Activated CD4-positive, alpha-beta T cell treated with anti-CD3 and anti-CD28 coated beads for 36 hours (primary cell): ENCODE measurements at regions of chr4 and their contacts with region 1.

Region 1: DNA sequence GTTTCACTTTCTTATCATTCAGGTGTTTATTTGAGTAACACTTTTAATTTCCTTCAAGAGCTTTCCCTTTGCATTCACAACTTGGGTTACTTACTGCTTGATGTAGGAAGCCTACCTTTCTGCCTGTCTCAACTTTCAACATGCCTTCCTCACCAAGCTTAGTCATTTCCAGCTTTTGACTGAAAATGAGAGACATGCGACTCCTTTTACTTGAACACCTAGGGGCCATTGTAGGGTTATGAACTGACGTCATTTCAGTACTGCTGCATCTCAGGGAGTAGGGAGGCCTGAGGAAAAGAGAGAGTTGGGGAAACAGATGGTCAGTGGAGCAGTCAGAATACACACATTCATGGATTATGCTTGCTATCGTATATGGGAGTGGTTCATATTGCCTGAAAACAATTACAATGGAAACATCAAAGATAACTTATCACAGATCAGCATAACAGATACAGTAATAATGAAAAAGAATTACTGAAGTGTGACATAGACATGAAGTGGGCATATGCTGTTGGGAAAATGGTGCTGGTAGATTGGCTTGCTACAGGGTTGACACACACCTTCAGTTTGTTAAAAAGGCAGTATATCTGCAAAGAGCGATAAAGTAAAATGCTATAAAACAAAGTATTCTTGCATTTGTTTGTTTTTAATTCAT is 25.7 kb downstream of the USP53 start:
- DNase-seq: peak; percentile 46
- ATAC-seq: peak; percentile 98
- H3K4me3 Mint-ChIP-seq: peak overlapping the region; percentile 24
- H3K27ac Mint-ChIP-seq: peak overlapping the region; percentile 75
- H3K4me1 Mint-ChIP-seq: peaks cover 44% of the 10 kb centered on the region
- H3K27me3 Mint-ChIP-seq: no peaks in the 10 kb centered on the region

Region 2: GRCh38 chr4:119103263-119103662 is 134.9 kb before region 1 on chr4:
- CTCF ChIA-PET with region 1: no interaction called
- POLR2A ChIA-PET with region 1: no interaction called
- intact Hi-C with region 1: no loop called
- DNase-seq: no peak
- ATAC-seq: no peak
- H3K4me3 Mint-ChIP-seq: no peak overlapping the region
- H3K27ac Mint-ChIP-seq: no peak overlapping the region
- H3K4me1 Mint-ChIP-seq: peaks cover 2% of the 10 kb centered on the region
- H3K27me3 Mint-ChIP-seq: peaks cover 4% of the 10 kb centered on the region

Region 3: DNA sequence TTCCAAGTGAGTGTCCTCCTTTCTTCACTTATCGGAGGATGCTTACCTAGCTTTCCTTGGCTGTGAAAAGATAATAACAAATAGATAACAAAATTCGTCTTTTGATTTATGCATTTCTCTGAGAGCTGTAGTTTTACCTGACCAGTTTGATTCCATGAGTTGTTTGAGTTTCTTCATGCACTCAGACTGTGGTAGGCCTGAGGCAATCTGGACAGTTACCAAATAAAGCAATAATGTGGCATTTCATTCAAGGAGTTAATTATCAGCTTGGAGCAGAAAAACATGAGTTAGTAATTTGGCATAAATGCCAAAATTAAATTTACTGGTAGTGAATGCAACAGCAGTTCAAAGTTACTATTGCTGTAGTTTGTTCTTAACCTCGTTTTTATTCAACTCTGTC is 30.3 kb after region 1 on chr4:
- CTCF ChIA-PET with region 1: no interaction called
- POLR2A ChIA-PET with region 1: no interaction called
- intact Hi-C with region 1: loop called in 1 of 2 experiments (anchors 2 kb)
- DNase-seq: no peak
- ATAC-seq: no peak
- H3K4me3 Mint-ChIP-seq: no peak overlapping the region
- H3K27ac Mint-ChIP-seq: no peak overlapping the region
- H3K4me1 Mint-ChIP-seq: peaks cover 13% of the 10 kb centered on the region
- H3K27me3 Mint-ChIP-seq: no peaks in the 10 kb centered on the region

Region 4: GRCh38 chr4:119286377-119287002 is 48.3 kb after region 1 on chr4:
- CTCF ChIA-PET with region 1: no interaction called
- POLR2A ChIA-PET with region 1: no interaction called
- intact Hi-C with region 1: loop called in 1 of 2 experiments (anchors 5 kb)
- DNase-seq: peak; percentile 47
- ATAC-seq: no peak
- H3K4me3 Mint-ChIP-seq: no peak overlapping the region
- H3K27ac Mint-ChIP-seq: no peak overlapping the region
- H3K4me1 Mint-ChIP-seq: peaks cover 12% of the 10 kb centered on the region
- H3K27me3 Mint-ChIP-seq: no peaks in the 10 kb centered on the region

Region 5: DNA sequence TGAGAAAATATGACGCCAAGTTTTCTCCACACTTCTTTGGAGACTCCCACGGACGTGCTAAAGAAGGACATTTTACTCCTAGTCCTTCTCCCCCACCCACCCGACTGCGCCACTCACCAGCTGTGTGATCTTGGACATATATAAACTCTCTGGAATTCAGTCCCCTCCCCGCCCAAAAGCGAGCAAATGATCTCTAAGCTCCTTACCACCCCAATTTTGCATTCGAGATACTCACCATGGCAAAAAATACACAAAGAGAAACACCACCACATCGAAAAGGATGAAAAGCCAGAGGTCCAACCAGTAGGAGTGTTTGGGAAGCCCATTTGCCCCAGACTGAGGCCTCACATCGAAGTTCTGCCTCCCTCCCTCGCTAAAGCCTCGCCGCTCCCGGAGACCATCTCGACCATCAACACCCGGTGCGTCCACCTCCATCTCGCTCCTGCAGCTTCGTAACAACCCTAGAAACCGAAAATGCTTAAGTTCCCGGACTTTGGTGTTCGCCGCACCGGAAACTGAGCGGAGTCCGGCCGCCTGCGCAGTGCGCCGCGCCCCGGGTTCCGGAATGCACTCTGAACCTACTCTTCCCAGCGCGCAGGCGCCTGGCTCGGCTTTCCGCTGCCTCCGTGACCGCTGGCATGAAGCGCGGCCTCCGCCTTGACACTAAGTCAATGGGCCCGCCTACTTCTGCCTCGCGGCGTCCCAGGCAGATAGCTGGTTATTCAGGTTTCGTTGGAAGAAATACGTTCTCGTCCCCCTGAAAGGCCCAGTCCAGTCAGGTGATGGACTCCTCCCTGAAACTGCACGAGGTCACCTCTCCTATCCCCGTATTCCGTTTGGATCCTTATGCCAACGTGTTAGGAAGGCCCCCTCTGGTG is 62.1 kb after region 1 on chr4:
- CTCF ChIA-PET with region 1: interaction called, 4 read pairs
- POLR2A ChIA-PET with region 1: no interaction called
- intact Hi-C with region 1: loop called (anchors 1 to 2 kb)
- DNase-seq: peak; percentile 97
- ATAC-seq: peak; percentile 98
- H3K4me3 Mint-ChIP-seq: peak overlapping the region; percentile 100
- H3K27ac Mint-ChIP-seq: peak overlapping the region; percentile 96
- H3K4me1 Mint-ChIP-seq: peaks cover 25% of the 10 kb centered on the region
- H3K27me3 Mint-ChIP-seq: no peaks in the 10 kb centered on the region